Activated CD4-positive, alpha-beta T cell treated with anti-CD3 and anti-CD28 coated beads, Interleukin-2, amount 10 ng/mL, durations not matched to agents 24 days and 14 days (primary cell): ENCODE measurements at regions of chr4 and their contacts with region 1.

Region 1: GRCh38 chr4:113756005-113756410 is 5.5 kb downstream of the CAMK2D start:
- DNase-seq: no peak
- H3K4me3 Mint-ChIP-seq: peak overlapping the region; percentile 68
- H3K27ac Mint-ChIP-seq: peak overlapping the region; percentile 80
- H3K4me1 Mint-ChIP-seq: peaks cover 43% of the 10 kb centered on the region
- H3K27me3 Mint-ChIP-seq: no peaks in the 10 kb centered on the region

Region 2: DNA sequence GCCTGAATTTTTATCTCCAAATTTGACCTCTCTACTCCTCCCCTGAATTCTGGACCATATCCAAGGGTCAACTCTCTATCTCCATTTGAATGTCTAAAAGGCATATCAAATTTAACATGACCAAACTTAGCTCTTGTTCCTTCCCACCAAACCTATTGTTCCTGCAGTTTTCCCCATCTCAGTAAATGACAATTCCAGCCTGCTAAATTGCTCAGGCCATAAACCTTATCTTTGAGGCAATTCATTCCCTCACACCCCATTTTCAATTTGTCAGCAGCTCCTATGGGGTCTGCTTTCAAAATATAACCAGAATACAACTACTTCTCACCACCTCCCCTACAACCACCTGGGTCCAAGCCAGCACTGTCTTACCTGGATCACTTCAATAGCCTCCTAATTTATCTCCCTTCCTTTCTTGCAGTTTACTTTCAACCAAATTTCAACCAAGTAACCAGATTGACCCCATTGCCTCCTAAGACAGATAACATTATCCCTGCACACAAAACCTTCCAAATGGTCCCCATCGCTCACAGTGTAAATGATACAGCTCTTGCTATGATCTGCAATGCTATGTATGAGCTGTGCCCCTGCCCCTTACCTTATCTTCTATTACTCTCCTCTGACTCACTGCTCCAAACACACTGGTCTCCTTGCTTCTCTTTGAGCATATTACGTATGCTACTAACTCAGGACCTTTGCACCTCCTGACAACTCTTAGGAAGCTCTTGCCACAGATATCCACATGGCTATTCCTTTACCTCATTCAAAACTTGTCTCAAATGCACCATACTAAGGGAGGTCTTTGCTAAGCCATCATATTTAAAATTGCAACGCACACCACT is 60.5 kb before region 1 on chr4:
- intact Hi-C with region 1: loop called (anchors 5 kb)
- DNase-seq: no peak
- H3K4me3 Mint-ChIP-seq: no peak overlapping the region
- H3K27ac Mint-ChIP-seq: no peak overlapping the region
- H3K4me1 Mint-ChIP-seq: peaks cover 28% of the 10 kb centered on the region
- H3K27me3 Mint-ChIP-seq: no peaks in the 10 kb centered on the region